BJ (cell line): ENCODE measurements at regions of chr14 and their contacts with region 1.

Region 1: DNA sequence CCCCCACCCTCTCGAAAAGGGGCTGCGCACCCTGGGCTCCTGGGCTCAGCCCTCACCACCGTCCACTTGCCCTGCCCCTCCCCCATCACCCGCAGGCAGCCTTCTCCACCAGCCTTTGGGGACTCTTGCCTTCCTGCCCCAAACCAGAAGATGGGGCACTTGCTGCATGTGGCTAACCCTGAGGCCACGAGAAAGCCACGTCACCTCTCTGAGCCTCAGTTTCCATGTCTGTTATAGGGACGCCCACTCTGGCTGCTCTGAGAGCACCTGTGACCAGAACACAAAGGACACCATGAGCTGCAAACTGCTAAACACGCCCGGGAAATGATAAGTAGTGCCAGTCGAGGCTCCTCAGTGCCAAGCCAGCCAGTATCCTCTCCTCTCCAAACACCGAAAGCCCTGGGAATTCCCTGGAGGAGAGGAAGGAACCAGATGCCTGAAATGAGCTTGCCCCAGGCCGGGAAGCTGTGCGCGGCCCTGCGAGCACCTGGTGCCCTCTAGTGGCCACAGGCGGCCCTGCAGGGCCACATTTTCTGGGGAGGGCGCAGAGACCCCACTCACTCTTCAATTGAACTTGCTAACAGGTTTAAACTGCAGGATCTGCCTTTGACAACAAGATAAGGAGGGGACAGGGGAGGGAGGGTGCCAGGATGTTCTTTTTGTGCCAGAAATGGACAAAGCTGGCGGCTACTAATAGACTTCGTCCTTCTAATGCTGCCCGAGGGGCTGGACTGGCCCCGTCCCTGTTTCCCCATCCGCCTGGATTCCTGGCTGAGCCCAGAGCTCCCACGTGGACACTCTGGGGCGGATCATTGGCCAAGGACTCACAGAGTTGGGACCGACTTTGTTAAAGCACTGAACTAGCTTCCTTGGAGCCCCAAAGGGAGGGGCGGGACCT is 10.2 kb upstream of the SERPINA9 start:
- DNase-seq: no peak
- H3K4me3 ChIP-seq: no peak overlapping the region
- H3K27me3 ChIP-seq: no peaks in the 10 kb centered on the region; the same call in 1 of the 2 replicates
- CTCF ChIP-seq: peak; percentile 100

Region 2: DNA sequence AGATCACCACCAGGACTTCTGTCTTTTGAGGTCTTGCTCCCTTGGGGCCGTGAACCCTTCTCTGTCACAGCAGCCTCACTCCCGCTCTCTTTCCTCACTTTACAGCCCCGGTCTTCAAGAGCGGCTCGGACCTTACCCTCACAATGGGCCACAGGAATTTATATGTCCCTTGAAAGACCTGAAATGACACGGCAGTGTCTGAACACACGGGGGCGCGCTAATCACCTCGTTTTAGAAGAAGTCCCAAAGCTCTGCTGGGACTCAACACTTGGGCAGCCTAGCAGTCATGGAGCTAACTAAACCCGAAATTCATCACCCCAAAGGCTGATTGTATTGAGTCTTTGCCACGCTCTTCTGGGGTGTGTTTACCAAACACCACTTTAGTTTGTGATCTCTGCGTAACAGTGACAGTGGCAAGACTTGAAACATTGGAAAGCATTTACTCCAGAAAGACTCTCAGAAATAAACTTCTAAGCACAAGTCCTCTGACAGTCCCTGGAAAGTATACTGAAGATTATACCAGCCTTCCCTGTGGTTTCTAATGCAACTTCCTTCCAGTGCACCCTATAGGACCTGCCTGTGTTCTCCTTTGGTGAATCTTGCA is 62.6 kb before region 1 on chr14:
- CTCF ChIA-PET with region 1: interaction called, 12 read pairs
- POLR2A ChIA-PET with region 1: no interaction called
- DNase-seq: no peak
- H3K4me3 ChIP-seq: no peak overlapping the region
- H3K27me3 ChIP-seq: peaks cover 2% of the 10 kb centered on the region; the same call in 1 of the 2 replicates
- CTCF ChIP-seq: peak; percentile 79

Region 3: GRCh38 chr14:94469261-94469660 is 16.9 kb before region 1 on chr14:
- CTCF ChIA-PET with region 1: interaction called, 16 read pairs
- POLR2A ChIA-PET with region 1: no interaction called
- DNase-seq: no peak
- H3K4me3 ChIP-seq: no peak overlapping the region
- H3K27me3 ChIP-seq: no peaks in the 10 kb centered on the region
- CTCF ChIP-seq: no peak

Region 4: GRCh38 chr14:94501588-94502516 is 15.7 kb after region 1 on chr14:
- CTCF ChIA-PET with region 1: interaction called, 37 read pairs
- POLR2A ChIA-PET with region 1: no interaction called
- DNase-seq: no peak
- H3K4me3 ChIP-seq: no peak overlapping the region
- H3K27me3 ChIP-seq: no peaks in the 10 kb centered on the region
- CTCF ChIP-seq: no peak